Panc1 (cell line): ENCODE measurements at regions of chr14 and their contacts with region 1.

Region 1: GRCh38 chr14:20493634-20494033 is 11.7 kb upstream of the RNASE10 start:
- DNase-seq: no peak
- ATAC-seq: no peak
- H3K4me3 ChIP-seq: no peak overlapping the region
- H3K27ac ChIP-seq: no peak overlapping the region
- H3K4me1 ChIP-seq: no peaks in the 10 kb centered on the region
- H3K27me3 ChIP-seq: no peaks in the 10 kb centered on the region
- CTCF ChIP-seq: no peak

Region 2: DNA sequence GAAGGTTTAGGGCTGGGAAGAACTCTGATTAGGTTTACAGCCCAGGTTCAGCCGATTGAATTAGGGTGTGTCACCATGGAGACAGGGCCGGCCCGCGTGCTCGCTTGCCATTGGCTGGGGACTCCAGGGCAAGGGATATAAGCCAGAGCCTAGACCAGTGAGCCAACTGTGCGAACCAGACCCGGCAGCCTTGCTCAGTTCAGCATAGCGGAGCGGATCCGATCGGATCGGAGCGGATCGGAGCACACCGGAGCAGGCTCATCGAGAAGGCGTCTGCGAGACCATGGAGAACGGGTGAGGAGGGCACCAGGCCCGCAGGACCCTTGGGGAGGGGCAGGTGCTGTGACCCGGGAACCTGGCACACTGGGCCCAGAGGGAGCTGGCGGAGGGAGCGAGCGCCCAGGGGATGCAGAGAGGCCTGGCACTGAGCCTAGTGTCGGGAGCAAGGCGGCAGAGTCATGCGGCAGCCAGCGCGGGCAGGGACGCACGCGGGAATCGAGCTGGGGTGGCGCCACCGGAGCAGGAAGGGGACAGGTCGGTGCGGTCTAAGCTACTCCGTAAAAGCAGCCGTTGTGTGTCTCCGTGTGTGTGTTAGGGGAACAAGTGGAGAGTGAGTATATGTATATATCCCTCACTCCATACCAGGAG is 24.3 kb before region 1 on chr14 and contains the start of gene PNP:
- CTCF ChIA-PET with region 1: no interaction called
- POLR2A ChIA-PET with region 1: interaction called, 21 read pairs
- in situ Hi-C with region 1: no loop called
- intact Hi-C with region 1: no loop called
- DNase-seq: peak; percentile 67
- ATAC-seq: peak; percentile 98
- H3K4me3 ChIP-seq: peak within 1 kb of the TSS; percentile 82 to 96
- H3K27ac ChIP-seq: peak within 1 kb of the TSS; percentile 74
- H3K4me1 ChIP-seq: peaks cover 3% of the 10 kb centered on the region
- H3K27me3 ChIP-seq: no peaks in the 10 kb centered on the region
- CTCF ChIP-seq: no peak
- total RNA-seq, gene PNP: 35.1 TPM